H1 (cell line): ENCODE measurements at regions of chr7 and their contacts with region 1.

Region 1: GRCh38 chr7:17769918-17770317 is 170.4 kb downstream of the SNX13 start:
- DNase-seq: peak; percentile 21 to 59
- H3K4me3 ChIP-seq: no peak overlapping the region
- H3K27ac ChIP-seq: no peak overlapping the region
- H3K4me1 ChIP-seq: peaks cover 0 to 8% (median 5%) of the 10 kb centered on the region in 4 experiments; a peak in 5 of 7 replicates
- H3K27me3 ChIP-seq: no peaks in the 10 kb centered on the region
- CTCF ChIP-seq: peak in 2 of 3 experiments; percentile 68 to 83; a peak in 3 of 4 replicates
- EP300 ChIP-seq: no peak
- POLR2A ChIP-seq: no peak
- RAD21 ChIP-seq: peak; percentile 94 to 96

Region 2: DNA sequence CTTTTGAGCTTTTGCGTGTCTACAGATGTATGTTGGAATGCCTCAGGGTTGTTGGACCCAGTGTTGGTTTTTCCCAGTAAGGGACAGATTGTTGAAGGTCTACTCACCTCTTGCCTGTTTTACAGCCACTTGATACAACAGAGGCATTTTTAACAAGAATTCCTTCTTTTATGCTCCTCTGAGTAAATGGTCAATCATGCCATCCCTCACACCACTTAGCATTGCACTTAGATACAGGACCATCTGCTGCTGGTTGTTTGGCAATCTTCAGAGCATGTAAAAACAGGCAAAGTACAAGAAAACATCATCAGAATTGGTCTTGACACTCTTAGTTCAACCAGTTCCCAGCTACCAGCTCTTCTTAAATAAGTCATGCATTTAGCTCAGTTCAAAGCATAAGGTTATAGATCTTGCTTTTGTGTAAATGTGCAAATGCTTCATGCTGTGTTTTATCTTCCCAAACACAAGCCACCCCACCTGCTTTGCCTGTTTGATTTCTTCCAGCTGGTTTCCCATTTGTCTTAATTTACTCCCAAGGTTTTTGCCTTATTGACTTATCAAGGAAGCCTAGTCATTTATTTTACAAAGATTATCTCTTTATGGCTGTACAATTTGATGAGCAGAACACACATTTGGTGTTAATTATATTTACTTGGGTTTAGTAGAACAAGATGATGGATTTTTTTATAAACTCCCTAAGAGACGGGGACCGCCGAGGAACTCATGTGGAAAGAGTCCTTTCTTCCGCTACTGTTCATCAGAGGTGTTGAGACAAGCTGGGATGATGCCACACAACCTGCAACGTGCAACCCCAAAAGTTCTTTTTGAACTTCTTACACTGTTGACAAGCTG is 334.9 kb before region 1 on chr7:
- CTCF ChIA-PET with region 1: no interaction called
- POLR2A ChIA-PET with region 1: no interaction called
- DNase-seq: no peak
- H3K4me3 ChIP-seq: no peak overlapping the region
- H3K27ac ChIP-seq: no peak overlapping the region
- H3K4me1 ChIP-seq: no peaks in the 10 kb centered on the region
- H3K27me3 ChIP-seq: no peaks in the 10 kb centered on the region
- CTCF ChIP-seq: no peak
- EP300 ChIP-seq: no peak
- POLR2A ChIP-seq: no peak
- RAD21 ChIP-seq: no peak

Region 3: DNA sequence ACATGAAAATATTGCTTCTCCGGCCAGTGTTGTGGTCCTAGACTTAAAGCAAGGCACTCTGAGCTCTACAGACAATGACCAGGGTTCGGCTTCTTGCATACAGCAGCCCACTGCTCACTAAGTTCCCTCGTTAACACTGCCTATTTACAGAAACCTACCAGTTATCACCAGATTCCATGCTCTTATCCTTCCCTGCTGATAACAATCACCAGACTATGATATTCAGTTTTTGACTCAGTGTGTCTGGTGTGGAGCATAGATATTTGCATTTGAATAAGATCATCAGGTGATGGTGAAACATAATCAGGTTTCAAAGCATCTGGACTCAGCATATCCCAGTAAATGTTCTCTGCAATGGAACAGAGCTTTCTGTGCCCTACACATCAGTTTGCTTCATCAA is 11.9 kb before region 1 on chr7:
- CTCF ChIA-PET with region 1: interaction called, 14 read pairs
- POLR2A ChIA-PET with region 1: no interaction called
- DNase-seq: no peak
- H3K4me3 ChIP-seq: no peak overlapping the region
- H3K27ac ChIP-seq: no peak overlapping the region
- H3K4me1 ChIP-seq: no peaks in the 10 kb centered on the region
- H3K27me3 ChIP-seq: no peaks in the 10 kb centered on the region
- CTCF ChIP-seq: no peak
- EP300 ChIP-seq: no peak
- POLR2A ChIP-seq: no peak
- RAD21 ChIP-seq: no peak

Region 4: DNA sequence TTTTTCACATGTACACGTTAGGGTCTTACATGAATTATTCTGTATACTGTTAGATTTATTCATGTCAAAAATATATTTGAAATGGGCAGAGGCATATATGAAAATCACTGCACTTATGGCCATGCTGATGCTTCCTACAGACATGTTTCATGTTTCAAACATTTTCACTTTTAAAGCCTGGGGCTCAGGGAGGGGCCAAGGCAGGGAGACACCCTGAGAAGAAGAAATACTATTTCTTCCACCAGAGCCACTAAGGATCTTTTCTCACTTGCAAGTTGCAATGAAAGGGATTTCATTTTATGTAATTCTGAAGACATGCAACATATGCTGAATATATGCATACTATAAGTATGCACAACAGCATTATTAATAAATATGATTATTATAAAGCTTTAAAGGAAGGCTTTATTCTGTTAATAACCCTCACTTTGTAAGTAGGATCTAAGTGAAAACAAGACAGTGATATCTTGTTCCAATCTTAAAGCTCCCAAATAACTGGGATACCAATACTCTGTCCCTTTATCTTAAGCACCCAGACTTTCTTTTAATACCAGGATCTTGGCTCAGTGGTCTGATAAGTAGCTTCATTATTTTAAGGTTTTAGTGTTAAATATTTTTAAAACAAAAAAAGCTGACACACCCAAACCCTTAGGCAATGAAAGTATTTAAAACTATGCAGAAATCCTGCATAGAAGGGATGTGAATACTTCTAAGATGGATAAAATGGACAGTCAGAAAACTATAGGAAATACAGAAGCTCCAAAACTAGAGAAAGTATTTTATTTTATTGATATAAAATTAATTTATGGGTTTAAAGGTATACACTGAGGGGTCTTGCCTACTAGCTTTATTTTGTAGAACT is 22.4 kb after region 1 on chr7:
- CTCF ChIA-PET with region 1: interaction called, 12 read pairs
- POLR2A ChIA-PET with region 1: no interaction called
- DNase-seq: no peak
- H3K4me3 ChIP-seq: no peak overlapping the region
- H3K27ac ChIP-seq: no peak overlapping the region
- H3K4me1 ChIP-seq: no peaks in the 10 kb centered on the region
- H3K27me3 ChIP-seq: no peaks in the 10 kb centered on the region
- CTCF ChIP-seq: no peak
- EP300 ChIP-seq: no peak
- POLR2A ChIP-seq: no peak
- RAD21 ChIP-seq: no peak

Region 5: GRCh38 chr7:17991866-17992648 is 222.1 kb after region 1 on chr7:
- CTCF ChIA-PET with region 1: interaction called, 149 read pairs
- POLR2A ChIA-PET with region 1: no interaction called
- DNase-seq: peak in 1 of 2 experiments; percentile 79
- H3K4me3 ChIP-seq: no peak overlapping the region
- H3K27ac ChIP-seq: no peak overlapping the region
- H3K4me1 ChIP-seq: no peaks in the 10 kb centered on the region
- H3K27me3 ChIP-seq: no peaks in the 10 kb centered on the region
- CTCF ChIP-seq: peak; percentile 47 to 67 (median 64)
- EP300 ChIP-seq: no peak
- POLR2A ChIP-seq: no peak
- RAD21 ChIP-seq: peak; percentile 73

Region 6: DNA sequence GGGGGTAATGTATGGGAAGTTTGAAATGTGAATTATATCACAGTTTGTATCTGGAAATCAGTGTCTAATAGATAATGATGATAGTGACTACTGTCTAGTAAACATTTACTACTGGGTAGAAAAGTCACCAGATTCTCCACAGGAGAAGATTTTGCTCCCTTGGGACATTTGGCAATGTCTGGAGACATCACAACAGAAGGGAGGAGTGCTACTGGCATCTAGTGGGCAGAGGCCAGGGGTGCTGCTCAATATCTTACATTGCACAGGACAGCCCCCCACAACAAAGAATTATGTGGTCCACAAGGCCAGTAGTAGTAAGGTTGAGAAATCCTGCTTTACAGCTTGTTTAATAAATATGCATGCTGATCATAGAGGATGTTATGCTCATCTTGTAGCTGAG is 350.1 kb after region 1 on chr7:
- CTCF ChIA-PET with region 1: interaction called, 46 read pairs
- POLR2A ChIA-PET with region 1: no interaction called
- DNase-seq: no peak
- H3K4me3 ChIP-seq: no peak overlapping the region
- H3K27ac ChIP-seq: no peak overlapping the region
- H3K4me1 ChIP-seq: no peaks in the 10 kb centered on the region; a peak in 1 of 7 replicates
- H3K27me3 ChIP-seq: no peaks in the 10 kb centered on the region
- CTCF ChIP-seq: peak; percentile 57 to 64 (median 61)
- EP300 ChIP-seq: no peak
- POLR2A ChIP-seq: no peak
- RAD21 ChIP-seq: peak; percentile 83 to 87

Region 7: DNA sequence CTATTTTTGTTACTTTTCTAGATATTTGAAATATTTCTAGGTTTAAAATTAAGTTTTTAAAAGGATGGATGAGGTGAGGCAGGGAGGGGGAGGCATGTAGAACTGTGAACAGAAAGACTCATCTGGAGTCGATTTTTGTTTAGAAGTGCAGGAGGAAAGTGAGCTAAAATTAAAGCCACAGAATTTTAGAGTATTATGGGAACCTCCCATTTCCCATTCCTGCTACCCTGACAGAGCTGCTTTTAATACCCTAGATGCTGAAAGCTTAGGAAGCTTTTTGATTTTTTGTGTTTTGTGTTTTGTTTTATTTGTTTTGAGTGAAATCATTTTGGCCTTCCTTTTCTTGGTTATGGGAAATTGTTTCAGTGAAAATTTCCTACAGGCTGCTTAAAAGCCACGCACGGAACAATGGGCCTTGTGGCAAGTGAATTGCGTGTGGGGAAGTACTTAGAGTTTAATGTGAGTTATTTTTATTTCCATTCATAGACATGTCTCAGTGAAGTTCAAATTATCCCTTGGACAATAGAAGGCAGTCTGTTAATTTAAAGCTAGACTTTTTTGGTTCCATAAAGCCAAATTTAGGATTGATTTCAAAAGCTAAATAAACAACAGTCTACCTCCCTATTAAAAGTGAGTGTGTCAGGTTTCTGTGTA is 623.7 kb after region 1 on chr7:
- CTCF ChIA-PET with region 1: no interaction called
- POLR2A ChIA-PET with region 1: no interaction called
- DNase-seq: no peak
- H3K4me3 ChIP-seq: no peak overlapping the region
- H3K27ac ChIP-seq: no peak overlapping the region
- H3K4me1 ChIP-seq: peaks cover 0 to 17% (median 2%) of the 10 kb centered on the region in 4 experiments; a peak in 1 of 7 replicates
- H3K27me3 ChIP-seq: no peaks in the 10 kb centered on the region
- CTCF ChIP-seq: no peak
- EP300 ChIP-seq: no peak
- POLR2A ChIP-seq: no peak
- RAD21 ChIP-seq: no peak